ENCODE measurements at regions of chr14 and their contacts with region 1.

Region 1: GRCh38 chr14:23588884-23589598 is 10.5 kb upstream of the JPH4 start:
- DNase-seq: peak; percentile 65 to 90 (median 83)
- ATAC-seq: peak; percentile 94
- H3K4me3 ChIP-seq: no peak overlapping the region
- H3K4me3 Mint-ChIP-seq: no peak overlapping the region
- H3K27ac ChIP-seq: no peak overlapping the region
- H3K27ac Mint-ChIP-seq: no peak overlapping the region
- H3K4me1 ChIP-seq: peaks cover 9% of the 10 kb centered on the region
- H3K4me1 Mint-ChIP-seq: peaks cover 11% of the 10 kb centered on the region
- H3K27me3 ChIP-seq: no peaks in the 10 kb centered on the region
- H3K27me3 Mint-ChIP-seq: peaks cover 16% of the 10 kb centered on the region
- CTCF ChIP-seq: peak; percentile 65

Region 2: DNA sequence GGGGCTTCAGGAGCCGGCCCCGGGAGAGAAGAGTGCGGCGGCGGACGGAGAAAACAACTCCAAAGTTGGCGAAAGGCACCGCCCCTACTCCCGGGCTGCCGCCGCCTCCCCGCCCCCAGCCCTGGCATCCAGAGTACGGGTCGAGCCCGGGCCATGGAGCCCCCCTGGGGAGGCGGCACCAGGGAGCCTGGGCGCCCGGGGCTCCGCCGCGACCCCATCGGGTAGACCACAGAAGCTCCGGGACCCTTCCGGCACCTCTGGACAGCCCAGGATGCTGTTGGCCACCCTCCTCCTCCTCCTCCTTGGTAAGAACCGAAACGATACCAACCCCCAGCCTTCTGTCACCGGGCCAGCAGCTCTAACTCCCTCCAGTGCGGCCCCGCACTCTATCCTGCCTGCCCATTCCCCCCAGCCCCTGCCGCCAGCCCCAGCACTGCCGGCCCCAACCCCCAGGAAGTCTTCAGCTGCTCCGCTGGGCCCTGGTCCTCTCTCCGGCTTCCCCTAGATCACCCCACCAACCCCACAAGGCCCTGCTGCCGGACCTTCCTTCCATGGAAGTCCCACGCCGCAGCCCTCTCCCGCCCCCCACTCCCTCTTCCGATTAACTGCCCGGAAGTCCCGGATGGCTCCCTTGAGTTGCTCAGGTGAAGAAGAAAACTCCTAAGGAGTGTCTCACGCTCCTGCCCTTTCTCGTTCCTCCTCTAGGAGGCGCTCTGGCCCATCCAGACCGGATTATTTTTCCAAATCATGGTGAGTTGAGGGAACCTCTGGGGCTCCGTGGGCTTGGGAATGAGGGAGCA is 716.8 kb before region 1 on chr14:
- CTCF ChIA-PET with region 1: no interaction called
- POLR2A ChIA-PET with region 1: no interaction called
- intact Hi-C with region 1: no loop called
- DNase-seq: peak; percentile 47 to 82 (median 73)
- ATAC-seq: peak; percentile 46
- H3K4me3 ChIP-seq: peak overlapping the region; percentile 82 to 83
- H3K4me3 Mint-ChIP-seq: peak overlapping the region; percentile 91
- H3K27ac ChIP-seq: peak overlapping the region; percentile 85 to 94
- H3K27ac Mint-ChIP-seq: peak overlapping the region; percentile 99
- H3K4me1 ChIP-seq: peaks cover 28% of the 10 kb centered on the region
- H3K4me1 Mint-ChIP-seq: peaks cover 36% of the 10 kb centered on the region
- H3K27me3 ChIP-seq: no peaks in the 10 kb centered on the region
- H3K27me3 Mint-ChIP-seq: no peaks in the 10 kb centered on the region
- CTCF ChIP-seq: peak; percentile 86

Region 3: DNA sequence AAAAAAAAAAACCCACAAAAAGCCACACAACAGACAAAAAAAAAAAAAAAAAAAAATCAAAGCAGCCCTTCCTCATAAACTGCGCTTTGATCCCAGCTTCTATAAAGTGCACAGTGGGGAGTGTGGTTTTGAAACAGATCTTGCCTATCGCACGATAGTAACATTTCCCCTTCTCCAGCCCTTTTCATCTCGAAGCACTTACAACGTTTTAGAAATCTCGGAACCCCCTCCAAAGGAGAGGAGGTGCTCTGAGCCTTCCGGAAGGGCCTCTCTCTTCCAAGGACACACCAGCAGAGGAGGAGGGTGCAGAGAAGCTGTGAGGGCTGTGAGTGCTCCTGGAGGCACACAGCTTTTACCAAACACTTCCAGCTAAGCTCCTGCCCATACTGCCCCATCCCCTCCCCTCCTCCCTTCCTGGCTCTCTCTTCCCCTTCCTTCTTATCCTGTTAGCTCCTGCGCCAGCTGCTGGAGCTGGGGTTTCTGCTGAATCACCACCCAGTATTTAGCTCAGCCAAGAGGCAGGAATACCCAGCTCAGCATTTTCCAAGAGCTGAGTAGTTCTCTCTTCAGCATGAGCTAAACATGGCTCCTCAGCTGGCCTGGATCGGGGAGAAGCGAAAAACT is 434.0 kb before region 1 on chr14:
- CTCF ChIA-PET with region 1: no interaction called
- POLR2A ChIA-PET with region 1: no interaction called
- intact Hi-C with region 1: no loop called
- DNase-seq: peak in 2 of 9 experiments; percentile 22 to 23
- ATAC-seq: no peak
- H3K4me3 ChIP-seq: no peak overlapping the region
- H3K4me3 Mint-ChIP-seq: peak overlapping the region; percentile 58
- H3K27ac ChIP-seq: no peak overlapping the region
- H3K27ac Mint-ChIP-seq: no peak overlapping the region
- H3K4me1 ChIP-seq: peaks cover 29% of the 10 kb centered on the region
- H3K4me1 Mint-ChIP-seq: peaks cover 24% of the 10 kb centered on the region
- H3K27me3 ChIP-seq: no peaks in the 10 kb centered on the region
- H3K27me3 Mint-ChIP-seq: peaks cover 5% of the 10 kb centered on the region
- CTCF ChIP-seq: no peak

Region 4: GRCh38 chr14:23605931-23606585 is 17.0 kb after region 1 on chr14:
- CTCF ChIA-PET with region 1: interaction called, 14 read pairs
- POLR2A ChIA-PET with region 1: interaction called, 3 read pairs
- intact Hi-C with region 1: no loop called
- DNase-seq: no peak
- ATAC-seq: no peak
- H3K4me3 ChIP-seq: no peak overlapping the region
- H3K4me3 Mint-ChIP-seq: no peak overlapping the region
- H3K27ac ChIP-seq: no peak overlapping the region
- H3K27ac Mint-ChIP-seq: no peak overlapping the region
- H3K4me1 ChIP-seq: peaks cover 19% of the 10 kb centered on the region
- H3K4me1 Mint-ChIP-seq: peaks cover 30% of the 10 kb centered on the region
- H3K27me3 ChIP-seq: no peaks in the 10 kb centered on the region
- H3K27me3 Mint-ChIP-seq: no peaks in the 10 kb centered on the region
- CTCF ChIP-seq: no peak

Region 5: GRCh38 chr14:23910101-23910875 is 321.2 kb after region 1 on chr14:
- CTCF ChIA-PET with region 1: interaction called, 23 read pairs
- POLR2A ChIA-PET with region 1: no interaction called
- intact Hi-C with region 1: no loop called
- DNase-seq: peak in 2 of 9 experiments; percentile 25 to 34
- ATAC-seq: no peak
- H3K4me3 ChIP-seq: no peak overlapping the region
- H3K4me3 Mint-ChIP-seq: no peak overlapping the region
- H3K27ac ChIP-seq: no peak overlapping the region
- H3K27ac Mint-ChIP-seq: no peak overlapping the region
- H3K4me1 ChIP-seq: no peaks in the 10 kb centered on the region
- H3K4me1 Mint-ChIP-seq: no peaks in the 10 kb centered on the region
- H3K27me3 ChIP-seq: peaks cover 0 to 4% of the 10 kb centered on the region in 2 experiments
- H3K27me3 Mint-ChIP-seq: peaks cover 21% of the 10 kb centered on the region
- CTCF ChIP-seq: peak; percentile 45

Region 6: GRCh38 chr14:23929822-23930294 is 340.8 kb after region 1 on chr14:
- CTCF ChIA-PET with region 1: interaction called, 67 read pairs
- POLR2A ChIA-PET with region 1: no interaction called
- intact Hi-C with region 1: loop called in 1 of 2 experiments (anchors 1 kb)
- DNase-seq: peak; percentile 69 to 91 (median 83)
- ATAC-seq: peak; percentile 98
- H3K4me3 ChIP-seq: no peak overlapping the region
- H3K4me3 Mint-ChIP-seq: no peak overlapping the region
- H3K27ac ChIP-seq: no peak overlapping the region
- H3K27ac Mint-ChIP-seq: no peak overlapping the region
- H3K4me1 ChIP-seq: no peaks in the 10 kb centered on the region
- H3K4me1 Mint-ChIP-seq: peaks cover 4% of the 10 kb centered on the region
- H3K27me3 ChIP-seq: peaks cover 0 to 3% of the 10 kb centered on the region in 2 experiments
- H3K27me3 Mint-ChIP-seq: no peaks in the 10 kb centered on the region
- CTCF ChIP-seq: peak; percentile 96